Sigmoid colon (tissue), 7 donors: ENCODE measurements at regions of chr15 and their contacts with region 1.

Region 1: GRCh38 chr15:100721770-100722550 is 119.6 kb downstream of the ASB7 start:
- DNase-seq: peak; percentile 96
- H3K4me3 ChIP-seq: no peak overlapping the region
- H3K27ac ChIP-seq: peak overlapping the region; percentile 78 to 83 (median 79)
- H3K4me1 ChIP-seq: peaks cover 5 to 36% (median 24%) of the 10 kb centered on the region in 4 donors
- H3K27me3 ChIP-seq: no peaks in the 10 kb centered on the region
- CTCF ChIP-seq: no peak
- EP300 ChIP-seq: peak in 3 of 4 donors; percentile 10 to 86 (median 61)
- POLR2A ChIP-seq: no peak

Region 2: GRCh38 chr15:100448492-100448891 is 273.5 kb before region 1 on chr15:
- intact Hi-C with region 1: no loop called
- DNase-seq: no peak
- H3K4me3 ChIP-seq: no peak overlapping the region
- H3K27ac ChIP-seq: no peak overlapping the region
- H3K4me1 ChIP-seq: no peaks in the 10 kb centered on the region
- H3K27me3 ChIP-seq: no peaks in the 10 kb centered on the region
- CTCF ChIP-seq: no peak
- EP300 ChIP-seq: no peak
- POLR2A ChIP-seq: no peak

Region 3: DNA sequence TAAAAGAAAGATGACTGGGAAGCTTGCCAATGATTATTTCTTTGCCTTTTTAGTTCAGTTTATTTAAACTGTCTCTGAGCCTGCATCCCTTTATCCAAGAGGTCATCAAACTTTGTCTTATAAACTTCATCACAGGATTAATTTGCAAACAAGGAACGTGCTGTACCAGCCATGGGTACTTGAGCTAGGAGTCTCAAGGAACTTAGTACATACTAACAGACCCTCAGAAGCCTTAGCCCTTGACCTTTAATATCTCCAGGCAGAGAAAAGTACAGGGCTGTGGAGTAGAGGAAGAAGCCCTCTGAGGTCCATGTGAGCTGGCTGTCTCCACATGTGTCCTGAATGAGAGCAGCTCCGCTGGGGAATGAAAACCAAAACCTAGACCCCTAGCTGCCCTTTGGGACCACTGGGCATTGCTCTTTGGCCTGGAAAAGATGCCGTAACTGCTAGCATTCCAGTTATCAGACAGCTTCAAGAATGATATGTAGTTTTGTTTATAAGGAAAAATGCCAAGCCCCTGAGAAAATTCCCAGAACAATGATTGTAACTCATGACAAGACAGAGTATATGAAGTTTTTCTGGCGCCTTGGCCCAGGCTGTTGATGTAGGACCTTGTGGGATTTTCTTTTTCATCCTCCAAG is 27.5 kb before region 1 on chr15:
- intact Hi-C with region 1: loop called (anchors 2 kb)
- DNase-seq: peak; percentile 61
- H3K4me3 ChIP-seq: no peak overlapping the region
- H3K27ac ChIP-seq: peak overlapping the region; percentile 50 to 76 (median 70)
- H3K4me1 ChIP-seq: peaks cover 0 to 24% (median 16%) of the 10 kb centered on the region in 4 donors
- H3K27me3 ChIP-seq: no peaks in the 10 kb centered on the region
- CTCF ChIP-seq: no peak
- EP300 ChIP-seq: peak; percentile 53 to 88 (median 62)
- POLR2A ChIP-seq: no peak